ENCODE measurements at regions of chr12 and their contacts with region 1.

Region 1: GRCh38 chr12:71663561-71664294 is at the start of gene ZFC3H1:
- DNase-seq: peak; percentile 93 to 99
- ATAC-seq: peak; percentile 93 to 96
- H3K4me3 ChIP-seq: peak within 1 kb of the TSS; percentile 69
- H3K27ac ChIP-seq: peak within 1 kb of the TSS; percentile 84 to 92
- H3K4me1 ChIP-seq: peaks cover 18% of the 10 kb centered on the region; the same call in 2 of the 3 replicates
- CTCF ChIP-seq: peak; percentile 21; the same call in 1 of the 3 replicates
- EP300 ChIP-seq: no peak
- POLR2A ChIP-seq: peak; percentile 92
- RAD21 ChIP-seq: no peak
- polyA plus RNA-seq, gene ZFC3H1: 45.2 and 58.3 TPM in 2 replicates

Region 2: GRCh38 chr12:71636704-71637115 is 27.0 kb before region 1 on chr12:
- CTCF ChIA-PET with region 1: interaction called, 10 read pairs
- POLR2A ChIA-PET with region 1: interaction called, 4 read pairs
- DNase-seq: peak; percentile 36 to 78
- ATAC-seq: peak; percentile 52 to 78; a peak in 5 of 6 replicates
- H3K4me3 ChIP-seq: no peak overlapping the region
- H3K27ac ChIP-seq: no peak overlapping the region
- H3K4me1 ChIP-seq: no peaks in the 10 kb centered on the region
- CTCF ChIP-seq: peak; percentile 81
- EP300 ChIP-seq: no peak
- POLR2A ChIP-seq: no peak
- RAD21 ChIP-seq: peak; percentile 59 to 66; a peak in 4 of 5 replicates

Region 3: GRCh38 chr12:71685914-71686665 is 22.4 kb after region 1 on chr12 and contains the start of gene TMEM19:
- CTCF ChIA-PET with region 1: interaction called, 24 read pairs
- POLR2A ChIA-PET with region 1: interaction called, 87 read pairs
- DNase-seq: peak; percentile 85 to 94
- ATAC-seq: peak; percentile 99
- H3K4me3 ChIP-seq: peak within 1 kb of the TSS; percentile 58
- H3K27ac ChIP-seq: peak within 1 kb of the TSS; percentile 87 to 96
- H3K4me1 ChIP-seq: peaks cover 29% of the 10 kb centered on the region; the same call in 2 of the 3 replicates
- CTCF ChIP-seq: peak; percentile 34; the same call in 1 of the 3 replicates
- EP300 ChIP-seq: no peak
- POLR2A ChIP-seq: peak; percentile 92
- RAD21 ChIP-seq: peak; percentile 17 to 39; a peak in 4 of 5 replicates
- polyA plus RNA-seq, gene TMEM19: 62.8 and 78.8 TPM in 2 replicates

Region 4: GRCh38 chr12:71719615-71720370 is 56.1 kb after region 1 on chr12:
- CTCF ChIA-PET with region 1: no interaction called
- POLR2A ChIA-PET with region 1: no interaction called
- DNase-seq: no peak
- ATAC-seq: no peak
- H3K4me3 ChIP-seq: no peak overlapping the region
- H3K27ac ChIP-seq: no peak overlapping the region
- H3K4me1 ChIP-seq: no peaks in the 10 kb centered on the region
- CTCF ChIP-seq: no peak
- EP300 ChIP-seq: no peak
- POLR2A ChIP-seq: no peak
- RAD21 ChIP-seq: no peak

Region 5: DNA sequence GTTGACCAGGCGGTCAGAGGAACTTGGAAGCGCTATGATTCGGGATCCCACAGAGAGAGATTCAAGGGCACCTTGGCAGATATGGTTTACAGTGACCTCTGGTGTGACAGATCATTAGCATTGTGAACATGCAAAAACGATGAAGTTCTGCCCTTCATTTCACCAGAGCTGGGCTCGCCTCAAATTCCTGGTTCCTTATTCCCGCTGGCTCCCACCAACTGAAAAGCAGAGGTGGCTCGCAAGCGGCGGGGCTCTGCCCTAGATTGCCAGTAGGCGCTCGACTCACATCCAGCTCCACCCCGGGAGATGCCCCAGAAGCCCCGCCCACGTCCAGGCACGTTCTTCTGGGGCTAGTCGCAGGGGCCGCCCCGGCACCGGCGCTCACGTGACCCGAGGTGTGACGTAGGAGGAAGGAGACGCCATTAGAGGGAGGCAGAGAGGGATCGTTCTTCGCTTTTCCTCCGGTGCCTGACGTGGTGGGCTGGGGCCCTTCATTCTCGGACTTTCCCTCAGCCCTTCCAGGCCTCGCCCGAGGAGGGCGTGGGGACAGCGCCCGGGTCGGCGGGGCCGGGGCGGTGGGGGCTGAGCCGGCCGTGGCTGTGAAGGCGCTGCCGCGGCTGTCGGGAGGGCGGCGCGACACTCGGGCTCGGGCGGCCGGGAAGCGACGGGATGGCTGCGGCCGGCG is 90.9 kb after region 1 on chr12 and contains the start of gene RAB21:
- CTCF ChIA-PET with region 1: interaction called, 4 read pairs
- POLR2A ChIA-PET with region 1: interaction called, 14 read pairs
- DNase-seq: peak; percentile 92 to 98
- ATAC-seq: peak; percentile 94 to 99
- H3K4me3 ChIP-seq: peak within 1 kb of the TSS; percentile 65
- H3K27ac ChIP-seq: peak within 1 kb of the TSS; percentile 87 to 89
- H3K4me1 ChIP-seq: peaks cover 9% of the 10 kb centered on the region; the same call in 1 of the 3 replicates
- CTCF ChIP-seq: no peak
- EP300 ChIP-seq: no peak
- POLR2A ChIP-seq: peak; percentile 90
- RAD21 ChIP-seq: no peak; a peak in 1 of 5 replicates
- polyA plus RNA-seq, gene RAB21: 23.8 and 33.3 TPM in 2 replicates

Region 6: DNA sequence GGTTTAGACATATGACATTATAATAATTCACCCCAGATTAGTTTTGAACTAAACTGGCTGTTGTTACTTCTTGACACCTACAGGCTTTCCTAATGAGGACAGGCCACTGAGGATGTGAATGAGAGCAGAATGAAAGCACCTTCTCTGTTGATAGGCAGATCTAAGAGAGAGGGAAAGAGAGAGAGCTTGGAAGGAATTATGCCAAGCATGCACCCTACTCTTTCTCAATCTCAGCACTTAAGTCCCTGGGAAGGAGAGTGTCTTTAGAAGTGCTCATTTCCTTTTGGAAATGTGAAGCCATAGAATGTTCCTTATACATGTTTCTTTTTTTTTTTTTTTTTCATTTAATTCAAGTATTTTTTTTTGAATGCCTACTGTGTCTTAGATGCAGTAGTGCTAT is 224.8 kb after region 1 on chr12:
- CTCF ChIA-PET with region 1: no interaction called
- POLR2A ChIA-PET with region 1: no interaction called
- DNase-seq: no peak
- ATAC-seq: no peak
- H3K4me3 ChIP-seq: no peak overlapping the region
- H3K27ac ChIP-seq: no peak overlapping the region
- H3K4me1 ChIP-seq: no peaks in the 10 kb centered on the region
- CTCF ChIP-seq: no peak
- EP300 ChIP-seq: no peak
- POLR2A ChIP-seq: no peak
- RAD21 ChIP-seq: no peak